WTC11 (cell line): ENCODE measurements at regions of chr14 and their contacts with region 1.

Region 1: GRCh38 chr14:105075379-105076295 is 10.4 kb upstream of the GPR132 start:
- DNase-seq: no peak
- ATAC-seq: peak; percentile 68
- H3K4me3 Mint-ChIP-seq: no peak overlapping the region
- H3K27ac Mint-ChIP-seq: no peak overlapping the region
- H3K4me1 Mint-ChIP-seq: 0 out of 2 replicates have a peak, but pooled peaks cover 3% of the 10 kb centered on the region
- H3K27me3 Mint-ChIP-seq: peaks cover 5% of the 10 kb centered on the region
- CTCF ChIP-seq: no peak

Region 2: GRCh38 chr14:105059035-105059924 is 16.4 kb before region 1 on chr14:
- CTCF ChIA-PET with region 1: interaction called, 31 read pairs
- POLR2A ChIA-PET with region 1: no interaction called
- DNase-seq: peak; percentile 46
- ATAC-seq: peak; percentile 76
- H3K4me3 Mint-ChIP-seq: no peak overlapping the region
- H3K27ac Mint-ChIP-seq: no peak overlapping the region
- H3K4me1 Mint-ChIP-seq: peaks cover 15% of the 10 kb centered on the region; the same call in 1 of the 2 replicates
- H3K27me3 Mint-ChIP-seq: peaks cover 28% of the 10 kb centered on the region
- CTCF ChIP-seq: no peak

Region 3: GRCh38 chr14:105100931-105101330 is 25.3 kb after region 1 on chr14:
- CTCF ChIA-PET with region 1: no interaction called
- POLR2A ChIA-PET with region 1: no interaction called
- DNase-seq: no peak
- ATAC-seq: no peak
- H3K4me3 Mint-ChIP-seq: no peak overlapping the region
- H3K27ac Mint-ChIP-seq: no peak overlapping the region
- H3K4me1 Mint-ChIP-seq: no peaks in the 10 kb centered on the region
- H3K27me3 Mint-ChIP-seq: peaks cover 28% of the 10 kb centered on the region
- CTCF ChIP-seq: no peak